Naive thymus-derived CD4-positive, alpha-beta T cell (primary cell): ENCODE measurements at regions of chr5 and their contacts with region 1.

Region 1: GRCh38 chr5:172035039-172035438 is 28.6 kb upstream of the FBXW11 start:
- DNase-seq: no peak
- ATAC-seq: peak; percentile 27
- H3K4me3 ChIP-seq: no peak overlapping the region
- H3K4me3 Mint-ChIP-seq: peak overlapping the region in 1 of 10 donors; percentile 20
- H3K27ac ChIP-seq: no peak overlapping the region
- H3K27ac Mint-ChIP-seq: no peak overlapping the region
- H3K4me1 ChIP-seq: no peaks in the 10 kb centered on the region
- H3K4me1 Mint-ChIP-seq: peaks cover 0 to 16% (median 9%) of the 10 kb centered on the region in 7 donors
- H3K27me3 ChIP-seq: no peaks in the 10 kb centered on the region
- H3K27me3 Mint-ChIP-seq: no peaks in the 10 kb centered on the region

Region 2: DNA sequence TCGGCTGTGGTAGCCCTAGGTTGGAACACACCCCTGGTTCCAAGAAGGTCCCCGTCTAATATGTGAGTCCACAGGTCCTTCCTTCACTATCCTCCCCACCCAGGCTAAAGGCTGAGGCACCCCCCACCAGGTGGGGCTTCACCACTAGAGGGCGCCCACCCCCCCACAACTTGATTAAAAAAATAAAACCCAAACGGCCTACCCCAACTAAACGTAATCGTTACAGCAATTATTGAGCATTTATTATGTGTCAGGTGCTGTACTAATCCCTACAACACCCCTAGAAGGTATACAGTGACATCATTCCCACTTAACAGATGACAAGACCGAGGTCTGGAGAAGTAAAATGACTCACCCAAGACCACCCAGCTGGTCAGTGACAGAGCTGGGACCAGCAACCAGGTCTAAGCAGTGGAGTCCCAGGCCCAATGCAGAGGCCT is 550.6 kb before region 1 on chr5:
- CTCF ChIA-PET with region 1: no interaction called
- POLR2A ChIA-PET with region 1: no interaction called
- intact Hi-C with region 1: loop called in 1 of 2 experiments (anchors 2 kb)
- DNase-seq: peak in 7 of 9 donors; percentile 2 to 42 (median 17)
- ATAC-seq: peak; percentile 69
- H3K4me3 ChIP-seq: no peak overlapping the region
- H3K4me3 Mint-ChIP-seq: no peak overlapping the region
- H3K27ac ChIP-seq: no peak overlapping the region
- H3K27ac Mint-ChIP-seq: peak overlapping the region in 1 of 9 donors; percentile 41
- H3K4me1 ChIP-seq: peaks cover 0 to 3% of the 10 kb centered on the region in 2 donors
- H3K4me1 Mint-ChIP-seq: peaks cover 0 to 8% (median 0%) of the 10 kb centered on the region in 7 donors
- H3K27me3 ChIP-seq: no peaks in the 10 kb centered on the region
- H3K27me3 Mint-ChIP-seq: peaks cover 3 to 15% (median 9%) of the 10 kb centered on the region in 5 donors